ENCODE measurements at regions of chr19 and their contacts with region 1.

Region 1: GRCh38 chr19:46840136-46840942 is 10.3 kb downstream of the AP2S1 start:
- DNase-seq: no peak

Region 2: DNA sequence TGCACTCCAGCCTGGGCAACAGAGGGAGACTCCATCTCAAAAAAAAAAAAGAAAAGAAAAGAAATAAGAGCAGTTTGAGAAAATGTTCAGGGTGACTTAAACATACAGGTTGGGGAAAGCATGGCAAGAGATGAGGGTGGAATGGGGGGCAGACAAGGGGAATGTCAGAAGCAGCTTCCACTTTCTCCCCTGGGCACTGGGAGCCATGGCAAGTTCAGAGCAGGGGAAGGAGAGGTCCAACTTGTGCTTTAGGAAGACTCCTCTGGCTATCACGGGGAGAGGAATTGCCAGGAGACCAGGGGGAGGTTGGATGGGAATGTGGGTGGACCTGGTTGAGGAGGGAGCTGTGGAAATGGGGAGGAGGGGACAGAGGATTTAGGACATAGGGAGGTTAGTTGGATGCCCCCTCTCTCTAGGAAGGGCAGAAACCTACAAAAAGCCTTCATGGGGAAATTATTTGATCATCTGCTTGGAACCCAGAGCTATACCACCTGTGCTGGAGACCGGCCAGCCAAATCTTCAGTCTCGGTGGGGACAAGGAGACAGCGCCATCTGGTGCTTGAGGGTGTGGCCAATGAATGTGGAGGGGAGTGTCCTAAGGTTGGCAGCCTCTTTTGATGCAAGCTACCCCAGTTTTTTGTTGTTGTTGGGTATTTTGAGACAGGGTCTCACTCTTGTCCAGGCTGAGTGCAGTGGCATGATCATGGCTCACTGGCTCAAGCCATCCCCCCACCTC is 86.8 kb before region 1 on chr19:
- intact Hi-C with region 1: loop called (anchors 2 to 5 kb)
- DNase-seq: no peak

Region 3: DNA sequence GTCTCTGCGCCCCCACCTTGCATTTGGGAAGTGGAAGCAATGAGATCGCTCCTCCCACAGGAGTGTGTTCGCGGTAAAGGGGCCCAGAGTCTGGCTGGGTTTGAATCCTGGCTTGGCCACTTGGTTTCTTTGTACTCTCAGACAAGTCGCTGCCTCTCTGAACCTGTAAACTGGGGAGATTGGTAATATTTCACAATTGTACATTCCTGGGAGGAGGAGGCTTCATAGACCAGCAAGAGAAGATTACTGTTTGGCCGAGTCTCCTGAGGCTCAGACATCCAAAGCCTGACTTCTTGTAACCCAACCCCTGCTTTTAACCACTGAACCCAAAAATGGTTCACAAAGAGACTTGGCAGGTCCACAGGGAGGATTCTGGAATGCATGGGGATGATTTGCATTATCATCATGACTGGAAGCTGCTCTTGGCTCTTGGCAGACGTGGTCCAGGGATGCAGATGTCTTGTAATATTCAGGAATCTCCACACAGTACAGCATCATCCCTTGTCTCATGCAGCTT is 80.5 kb before region 1 on chr19:
- intact Hi-C with region 1: loop called (anchors 2 to 5 kb)
- DNase-seq: no peak

Region 4: GRCh38 chr19:46791955-46792378 is 48.4 kb before region 1 on chr19:
- intact Hi-C with region 1: loop called in 1 of 2 experiments (anchors 5 kb)
- DNase-seq: no peak

Region 5: GRCh38 chr19:46860125-46860845 is 19.9 kb after region 1 on chr19:
- intact Hi-C with region 1: no loop called
- DNase-seq: peak; percentile 99

Measured in posterior vena cava (tissue), 2 donors.